GM12878 (cell line): ENCODE measurements at regions of chr3 and their contacts with region 1.

Region 1: GRCh38 chr3:57169872-57170623 is 4.9 kb upstream of the IL17RD start:
- DNase-seq: no peak
- ATAC-seq: peak; percentile 91
- H3K4me3 ChIP-seq: peak overlapping the region; percentile 75
- H3K27ac ChIP-seq: no peak overlapping the region; the same call in 1 of the 2 replicates
- H3K4me1 ChIP-seq: 0 out of 2 replicates have a peak, but pooled peaks cover 4% of the 10 kb centered on the region
- H3K27me3 ChIP-seq: peaks cover 0 to 4% of the 10 kb centered on the region in 2 experiments; a peak in 2 of 4 replicates
- CTCF ChIP-seq: peak; percentile 78 to 88 (median 84)
- EP300 ChIP-seq: 0 out of 4 replicates have a peak, but pooled peaks of 1 of the 2 experiments have one; percentile 25
- POLR2A ChIP-seq: no peak
- RAD21 ChIP-seq: peak; percentile 79

Region 2: GRCh38 chr3:56997675-56998074 is 172.4 kb before region 1 on chr3:
- CTCF ChIA-PET with region 1: interaction called, 8 read pairs
- POLR2A ChIA-PET with region 1: no interaction called
- RAD21 ChIA-PET with region 1: no interaction called
- SMC1A ChIA-PET with region 1: interaction called, 3 read pairs
- in situ Hi-C with region 1: no loop called
- intact Hi-C with region 1: loop called (anchors 10 kb)
- DNase-seq: no peak
- ATAC-seq: no peak
- H3K4me3 ChIP-seq: no peak overlapping the region
- H3K27ac ChIP-seq: no peak overlapping the region
- H3K4me1 ChIP-seq: no peaks in the 10 kb centered on the region; the same call in 1 of the 2 replicates
- H3K27me3 ChIP-seq: no peaks in the 10 kb centered on the region
- CTCF ChIP-seq: no peak
- EP300 ChIP-seq: no peak
- POLR2A ChIP-seq: no peak
- RAD21 ChIP-seq: no peak

Region 3: GRCh38 chr3:57100046-57100695 is 69.9 kb before region 1 on chr3:
- CTCF ChIA-PET with region 1: interaction called, 7 read pairs
- POLR2A ChIA-PET with region 1: no interaction called
- RAD21 ChIA-PET with region 1: interaction called, 4 read pairs
- SMC1A ChIA-PET with region 1: interaction called, 3 read pairs
- in situ Hi-C with region 1: no loop called
- intact Hi-C with region 1: loop called (anchors 2 kb)
- DNase-seq: peak; percentile 16
- ATAC-seq: peak; percentile 96
- H3K4me3 ChIP-seq: no peak overlapping the region
- H3K27ac ChIP-seq: no peak overlapping the region
- H3K4me1 ChIP-seq: no peaks in the 10 kb centered on the region
- H3K27me3 ChIP-seq: no peaks in the 10 kb centered on the region
- CTCF ChIP-seq: peak; percentile 73 to 91 (median 84)
- EP300 ChIP-seq: no peak
- POLR2A ChIP-seq: no peak
- RAD21 ChIP-seq: peak; percentile 91

Region 4: DNA sequence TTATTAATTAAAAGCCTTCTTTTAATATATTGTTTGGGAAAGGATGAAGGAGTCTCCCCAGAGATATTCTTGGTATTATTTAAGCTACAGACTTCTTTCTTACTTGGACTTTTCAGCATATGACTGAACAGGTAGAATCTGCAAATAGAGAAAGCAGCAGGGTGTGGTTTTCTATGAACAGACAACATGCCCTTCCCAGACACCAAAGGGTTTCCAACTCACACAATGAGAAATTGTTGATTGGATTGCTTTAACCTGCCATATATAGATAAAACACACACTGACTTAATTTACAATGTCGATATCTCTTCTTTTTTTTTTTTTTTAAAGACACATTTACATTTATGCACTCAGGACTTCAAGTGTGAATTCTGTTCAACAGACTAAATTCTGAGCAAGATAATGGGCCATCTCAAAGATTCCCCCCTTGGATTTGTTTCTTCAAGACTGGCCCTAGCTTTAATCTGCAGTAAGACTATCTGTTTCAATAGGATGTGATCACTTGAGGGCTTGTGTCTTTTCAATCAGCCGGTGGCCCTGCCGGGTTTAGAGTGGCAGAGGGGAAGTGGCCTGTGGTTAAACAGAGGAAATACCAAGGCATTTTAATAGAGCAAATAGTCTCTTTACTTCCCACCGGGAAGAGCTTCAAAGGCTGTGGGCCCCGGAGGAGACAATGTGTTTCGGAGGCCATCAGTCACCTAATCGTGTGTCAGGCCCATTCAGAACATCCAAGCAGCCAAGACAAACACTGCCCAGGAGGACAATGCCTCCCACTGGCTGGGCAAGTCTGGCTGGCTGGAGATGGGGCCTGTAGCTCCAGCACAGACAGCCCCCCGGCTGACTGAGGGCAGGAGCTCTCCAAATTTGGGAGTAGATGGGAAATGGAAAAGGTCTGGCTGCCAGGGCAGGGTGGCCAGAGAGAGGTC is 11.0 kb before region 1 on chr3:
- CTCF ChIA-PET with region 1: interaction called, 12 read pairs
- POLR2A ChIA-PET with region 1: no interaction called
- RAD21 ChIA-PET with region 1: interaction called, 5 read pairs
- SMC1A ChIA-PET with region 1: interaction called, 5 read pairs
- in situ Hi-C with region 1: no loop called
- intact Hi-C with region 1: no loop called
- DNase-seq: no peak
- ATAC-seq: peak; percentile 42; the same call in 2 of the 3 replicates
- H3K4me3 ChIP-seq: no peak overlapping the region
- H3K27ac ChIP-seq: no peak overlapping the region
- H3K4me1 ChIP-seq: no peaks in the 10 kb centered on the region
- H3K27me3 ChIP-seq: peaks cover 9 to 15% of the 10 kb centered on the region in 2 experiments
- CTCF ChIP-seq: no peak
- EP300 ChIP-seq: no peak
- POLR2A ChIP-seq: no peak
- RAD21 ChIP-seq: no peak

Region 5: DNA sequence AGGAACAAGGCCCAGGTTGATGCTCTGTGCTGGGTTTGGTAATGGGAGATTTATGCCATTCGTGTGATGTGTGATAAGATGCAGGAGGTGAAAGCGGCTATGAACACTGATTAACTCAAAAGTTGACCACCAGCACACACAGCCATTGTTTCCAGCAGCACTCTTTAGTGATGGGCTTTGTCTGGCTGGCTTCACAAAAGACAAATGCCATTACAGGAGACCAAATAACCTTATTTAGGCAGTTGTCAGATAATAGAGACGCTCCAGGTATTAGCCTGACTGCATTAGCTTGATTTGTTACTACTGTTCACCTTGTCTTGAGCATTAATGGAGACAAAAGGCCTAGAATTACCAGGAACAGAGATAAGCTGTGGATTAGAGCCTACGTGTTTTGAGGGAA is 24.6 kb after region 1 on chr3:
- CTCF ChIA-PET with region 1: interaction called, 23 read pairs
- POLR2A ChIA-PET with region 1: no interaction called
- RAD21 ChIA-PET with region 1: interaction called, 7 read pairs
- SMC1A ChIA-PET with region 1: interaction called, 5 read pairs
- in situ Hi-C with region 1: no loop called
- intact Hi-C with region 1: no loop called
- DNase-seq: no peak
- ATAC-seq: no peak
- H3K4me3 ChIP-seq: no peak overlapping the region
- H3K27ac ChIP-seq: no peak overlapping the region
- H3K4me1 ChIP-seq: no peaks in the 10 kb centered on the region
- H3K27me3 ChIP-seq: no peaks in the 10 kb centered on the region
- CTCF ChIP-seq: no peak
- EP300 ChIP-seq: no peak
- POLR2A ChIP-seq: no peak
- RAD21 ChIP-seq: no peak

Region 6: GRCh38 chr3:57221883-57222282 is 51.8 kb after region 1 on chr3:
- CTCF ChIA-PET with region 1: interaction called, 6 read pairs
- POLR2A ChIA-PET with region 1: no interaction called
- RAD21 ChIA-PET with region 1: interaction called, 4 read pairs
- SMC1A ChIA-PET with region 1: interaction called, 16 read pairs
- in situ Hi-C with region 1: no loop called
- intact Hi-C with region 1: no loop called
- DNase-seq: no peak
- ATAC-seq: no peak
- H3K4me3 ChIP-seq: no peak overlapping the region
- H3K27ac ChIP-seq: no peak overlapping the region
- H3K4me1 ChIP-seq: peaks cover 12% of the 10 kb centered on the region
- H3K27me3 ChIP-seq: no peaks in the 10 kb centered on the region
- CTCF ChIP-seq: peak in 1 of 3 experiments; percentile 19; a peak in 1 of 6 replicates
- EP300 ChIP-seq: no peak
- POLR2A ChIP-seq: no peak
- RAD21 ChIP-seq: 0 out of 2 replicates have a peak, but pooled peaks have one; percentile 1

Region 7: DNA sequence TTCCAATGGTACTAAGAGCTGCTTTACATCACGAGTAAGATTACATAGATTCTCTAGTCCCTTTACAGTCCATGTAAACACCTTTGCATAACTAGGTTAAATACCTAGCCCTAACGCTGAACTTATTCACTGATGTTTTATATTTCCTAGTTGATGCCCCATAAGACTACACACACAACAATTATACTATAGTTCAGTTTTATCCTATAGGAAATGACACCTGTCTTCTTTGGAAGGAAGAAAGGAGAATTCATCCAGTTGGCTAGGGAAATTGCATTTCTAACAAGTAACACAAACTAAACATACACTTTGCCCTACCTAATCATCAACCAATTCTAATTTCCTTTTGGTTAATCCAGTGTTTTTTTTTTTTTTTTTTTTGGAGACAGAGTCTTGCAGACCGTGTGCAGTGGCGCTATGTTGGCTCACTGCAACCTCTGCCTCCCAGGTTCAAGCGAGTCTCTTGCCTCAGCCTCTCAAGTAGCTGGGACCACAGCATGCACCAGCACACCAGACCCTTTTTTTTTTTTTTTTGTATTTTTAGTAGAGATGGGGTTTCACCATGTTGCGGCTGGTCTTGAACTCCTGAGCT is 399.9 kb after region 1 on chr3:
- CTCF ChIA-PET with region 1: interaction called, 3 read pairs
- POLR2A ChIA-PET with region 1: no interaction called
- RAD21 ChIA-PET with region 1: no interaction called
- SMC1A ChIA-PET with region 1: no interaction called
- in situ Hi-C with region 1: no loop called
- intact Hi-C with region 1: loop called (anchors 10 kb)
- DNase-seq: no peak
- ATAC-seq: no peak
- H3K4me3 ChIP-seq: no peak overlapping the region
- H3K27ac ChIP-seq: no peak overlapping the region
- H3K4me1 ChIP-seq: no peaks in the 10 kb centered on the region
- H3K27me3 ChIP-seq: no peaks in the 10 kb centered on the region
- CTCF ChIP-seq: no peak
- EP300 ChIP-seq: no peak
- POLR2A ChIP-seq: no peak
- RAD21 ChIP-seq: no peak